Lower leg skin (tissue), 4 donors: ENCODE measurements at regions of chr7 and their contacts with region 1.

Region 1: DNA sequence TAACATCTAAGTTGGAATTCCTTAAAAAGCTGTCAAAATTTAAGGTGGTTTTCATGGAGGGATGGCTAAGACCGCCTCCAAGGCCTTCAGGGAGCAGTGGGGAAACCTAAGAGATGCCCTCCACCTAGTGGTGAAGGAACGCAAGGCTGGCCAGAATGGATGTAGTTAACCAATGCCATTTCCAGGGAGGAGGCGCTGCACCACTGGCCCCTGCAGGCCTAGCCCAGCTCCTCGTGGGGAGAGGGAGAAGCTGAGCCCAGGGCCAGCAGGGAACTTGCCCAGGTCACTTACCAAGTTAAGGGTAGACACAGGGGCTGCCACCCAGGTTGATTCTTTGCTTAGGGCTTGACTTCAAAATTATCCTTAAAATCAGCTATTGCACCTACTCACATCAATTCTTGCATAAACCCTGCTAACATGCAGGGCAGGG is 32.0 kb downstream of the FIGNL1 start:
- DNase-seq: peak in 1 of 2 donors; percentile 53
- H3K4me3 ChIP-seq: no peak overlapping the region
- CTCF ChIP-seq: no peak
- POLR2A ChIP-seq: no peak

Region 2: DNA sequence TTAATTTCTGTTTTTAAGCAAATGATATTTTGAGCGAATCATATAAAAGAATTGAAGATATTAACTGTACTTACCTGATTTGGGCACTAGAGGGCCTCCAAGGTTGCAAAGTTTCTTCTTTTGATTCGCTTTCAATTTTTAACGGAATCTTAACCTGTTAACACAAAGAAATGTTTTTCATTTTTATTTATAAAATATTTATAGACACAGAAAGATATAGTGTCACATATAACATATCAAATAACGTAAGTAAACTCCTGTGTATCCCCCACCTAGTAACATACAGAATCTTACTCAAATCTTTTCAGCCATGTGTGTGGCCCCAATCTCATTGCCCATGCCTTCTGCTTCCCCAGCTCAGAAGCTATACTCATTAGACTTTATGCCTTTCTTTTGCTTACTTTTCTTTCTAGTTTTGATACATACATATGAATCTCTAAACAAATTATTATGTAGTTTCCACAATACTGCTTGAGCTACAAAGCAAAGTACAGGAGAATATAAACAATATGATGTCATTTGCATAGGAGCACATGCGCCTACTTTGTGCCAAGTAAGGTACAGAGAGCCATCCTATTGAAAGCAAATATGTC is 275.6 kb before region 1 on chr7:
- intact Hi-C with region 1: loop called (anchors 10 kb)
- DNase-seq: no peak
- H3K4me3 ChIP-seq: no peak overlapping the region
- CTCF ChIP-seq: no peak
- POLR2A ChIP-seq: no peak